ENCODE measurements at regions of chr17 and their contacts with region 1.

Region 1: GRCh38 chr17:81601525-81602120 is 35.3 kb downstream of the NPLOC4 start:
- DNase-seq: peak; percentile 44 to 66 (median 50)
- ATAC-seq: peak; percentile 92
- H3K4me3 ChIP-seq: no peak overlapping the region
- H3K27ac ChIP-seq: no peak overlapping the region
- H3K4me1 ChIP-seq: no peaks in the 10 kb centered on the region
- H3K27me3 ChIP-seq: no peaks in the 10 kb centered on the region
- CTCF ChIP-seq: peak; percentile 67 to 85 (median 82)
- POLR2A ChIP-seq: no peak

Region 2: DNA sequence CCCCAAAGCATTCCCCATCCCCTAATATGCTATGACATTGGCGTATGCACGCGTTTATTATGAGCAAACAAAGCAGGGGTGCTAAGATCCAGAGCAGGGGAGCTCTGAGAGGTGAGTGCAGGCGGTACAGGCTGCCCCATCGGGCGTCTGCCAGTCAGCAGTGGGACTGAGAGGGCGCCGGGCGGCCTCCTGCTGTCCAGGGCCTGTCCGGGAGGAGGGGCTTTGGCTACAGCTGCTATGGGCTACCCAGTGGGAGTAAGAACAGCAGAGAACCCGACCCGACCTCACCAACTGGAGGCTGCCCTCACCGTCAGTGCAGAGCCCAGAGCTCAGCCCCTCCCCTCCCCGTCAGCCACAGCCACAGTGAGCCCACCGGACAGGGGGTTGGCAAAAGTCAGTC is 417.1 kb before region 1 on chr17:
- intact Hi-C with region 1: no loop called
- DNase-seq: no peak
- ATAC-seq: no peak
- H3K4me3 ChIP-seq: no peak overlapping the region
- H3K27ac ChIP-seq: no peak overlapping the region
- H3K4me1 ChIP-seq: no peaks in the 10 kb centered on the region
- H3K27me3 ChIP-seq: no peaks in the 10 kb centered on the region
- CTCF ChIP-seq: no peak
- POLR2A ChIP-seq: no peak

Region 3: GRCh38 chr17:81245024-81245664 is 356.5 kb before region 1 on chr17:
- intact Hi-C with region 1: loop called (anchors 5 kb)
- DNase-seq: no peak
- ATAC-seq: no peak
- H3K4me3 ChIP-seq: no peak overlapping the region
- H3K27ac ChIP-seq: no peak overlapping the region
- H3K4me1 ChIP-seq: peaks cover 8% of the 10 kb centered on the region
- H3K27me3 ChIP-seq: no peaks in the 10 kb centered on the region
- CTCF ChIP-seq: no peak
- POLR2A ChIP-seq: no peak

Region 4: GRCh38 chr17:81558941-81559806 is 42.4 kb before region 1 on chr17:
- intact Hi-C with region 1: loop called (anchors 5 kb)
- DNase-seq: no peak
- ATAC-seq: no peak
- H3K4me3 ChIP-seq: no peak overlapping the region
- H3K27ac ChIP-seq: no peak overlapping the region
- H3K4me1 ChIP-seq: peaks cover 1% of the 10 kb centered on the region
- H3K27me3 ChIP-seq: no peaks in the 10 kb centered on the region
- CTCF ChIP-seq: no peak
- POLR2A ChIP-seq: no peak

Region 5: DNA sequence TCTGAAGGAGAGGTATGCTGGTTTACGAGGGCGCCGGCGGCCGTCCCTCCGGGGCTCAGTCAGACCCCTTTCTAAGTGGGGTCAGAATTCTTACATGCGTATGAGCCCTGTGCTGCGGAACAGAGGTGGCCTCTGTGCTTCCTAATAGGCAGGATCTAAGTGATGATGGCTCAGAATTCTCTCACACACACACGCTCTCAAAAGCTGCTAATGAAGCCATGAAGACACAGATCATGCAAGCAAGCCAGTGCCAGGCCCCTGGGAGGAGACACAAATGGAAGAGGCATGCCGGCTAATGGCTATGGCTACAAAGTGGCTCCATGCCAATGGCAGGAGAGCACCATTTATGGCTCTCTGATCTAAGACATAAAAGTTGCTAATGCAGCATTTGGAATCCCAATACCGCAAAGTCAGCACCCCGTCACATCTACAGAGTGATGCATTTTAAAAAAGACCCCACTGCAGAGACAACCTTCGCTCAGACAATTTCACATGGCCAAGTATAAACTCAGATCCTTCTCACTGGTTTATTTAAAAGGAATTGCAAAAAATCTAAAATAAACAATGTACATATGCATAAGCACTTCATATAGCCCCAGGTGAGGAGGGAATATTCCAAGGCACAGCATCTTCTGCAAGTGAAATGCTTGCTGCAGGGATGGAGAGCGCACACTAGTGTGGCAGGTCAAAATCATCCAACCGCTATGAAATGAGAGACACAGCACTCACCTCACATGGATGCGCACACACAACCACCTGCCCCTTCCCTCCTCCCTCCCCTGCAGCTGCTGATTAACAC is 10.7 kb after region 1 on chr17:
- intact Hi-C with region 1: no loop called
- DNase-seq: no peak
- ATAC-seq: no peak
- H3K4me3 ChIP-seq: no peak overlapping the region
- H3K27ac ChIP-seq: no peak overlapping the region
- H3K4me1 ChIP-seq: no peaks in the 10 kb centered on the region
- H3K27me3 ChIP-seq: no peaks in the 10 kb centered on the region
- CTCF ChIP-seq: no peak
- POLR2A ChIP-seq: no peak